ENCODE measurements at regions of chr19 and their contacts with region 1.

Region 1: GRCh38 chr19:29714953-29715700 is at the start of gene C19orf12:
- H3K4me3 ChIP-seq: peak within 1 kb of the TSS; percentile 65
- H3K27ac ChIP-seq: peak within 1 kb of the TSS; percentile 96
- H3K4me1 ChIP-seq: peaks cover 16% of the 10 kb centered on the region
- CTCF ChIP-seq: 0 out of 2 replicates have a peak, but pooled peaks have one; percentile 34

Region 2: GRCh38 chr19:29610563-29611271 is 104.4 kb before region 1 on chr19:
- CTCF ChIA-PET with region 1: interaction called, 299 read pairs
- POLR2A ChIA-PET with region 1: interaction called, 40 read pairs
- H3K4me3 ChIP-seq: no peak overlapping the region
- H3K27ac ChIP-seq: no peak overlapping the region
- H3K4me1 ChIP-seq: peaks cover 7% of the 10 kb centered on the region
- CTCF ChIP-seq: peak; percentile 98

Region 3: GRCh38 chr19:29645911-29646310 is 69.2 kb before region 1 on chr19:
- CTCF ChIA-PET with region 1: interaction called, 12 read pairs
- POLR2A ChIA-PET with region 1: no interaction called
- H3K4me3 ChIP-seq: no peak overlapping the region
- H3K27ac ChIP-seq: no peak overlapping the region
- H3K4me1 ChIP-seq: peaks cover 7% of the 10 kb centered on the region; the same call in 1 of the 2 replicates
- CTCF ChIP-seq: no peak

Region 4: GRCh38 chr19:29680447-29680846 is 34.7 kb before region 1 on chr19:
- CTCF ChIA-PET with region 1: interaction called, 11 read pairs
- POLR2A ChIA-PET with region 1: interaction called, 3 read pairs
- H3K4me3 ChIP-seq: no peak overlapping the region
- H3K27ac ChIP-seq: no peak overlapping the region
- H3K4me1 ChIP-seq: no peaks in the 10 kb centered on the region
- CTCF ChIP-seq: no peak

Region 5: DNA sequence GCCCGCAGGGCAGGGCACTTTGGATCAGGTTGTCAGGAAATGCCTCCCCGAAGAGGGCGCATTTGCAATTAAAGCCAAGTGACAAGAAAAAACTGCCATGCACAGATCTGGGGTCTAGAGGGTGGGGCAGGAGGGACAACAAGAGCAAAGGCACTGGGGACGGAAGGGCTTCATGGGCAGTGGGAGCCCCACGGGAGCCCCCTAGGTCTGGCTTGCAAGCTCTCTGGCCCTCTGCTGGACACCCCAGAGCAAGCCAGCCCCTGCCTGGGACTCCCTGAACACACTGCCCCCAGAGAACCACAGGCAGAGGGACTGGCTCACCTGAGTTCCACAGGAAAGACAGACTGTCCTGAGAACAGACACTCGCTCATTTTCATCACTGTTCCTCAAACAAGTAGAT is 30.1 kb after region 1 on chr19:
- CTCF ChIA-PET with region 1: interaction called, 12 read pairs
- POLR2A ChIA-PET with region 1: interaction called, 4 read pairs
- H3K4me3 ChIP-seq: no peak overlapping the region
- H3K27ac ChIP-seq: no peak overlapping the region
- H3K4me1 ChIP-seq: 0 out of 2 replicates have a peak, but pooled peaks cover 3% of the 10 kb centered on the region
- CTCF ChIP-seq: peak; percentile 92

Region 6: GRCh38 chr19:29873024-29873800 is 158.1 kb after region 1 on chr19:
- CTCF ChIA-PET with region 1: interaction called, 20 read pairs
- POLR2A ChIA-PET with region 1: interaction called, 3 read pairs
- H3K4me3 ChIP-seq: peak overlapping the region; percentile 47
- H3K27ac ChIP-seq: peak overlapping the region; percentile 76; the same call in 1 of the 2 replicates
- H3K4me1 ChIP-seq: peaks cover 12% of the 10 kb centered on the region
- CTCF ChIP-seq: peak; percentile 86

Region 7: DNA sequence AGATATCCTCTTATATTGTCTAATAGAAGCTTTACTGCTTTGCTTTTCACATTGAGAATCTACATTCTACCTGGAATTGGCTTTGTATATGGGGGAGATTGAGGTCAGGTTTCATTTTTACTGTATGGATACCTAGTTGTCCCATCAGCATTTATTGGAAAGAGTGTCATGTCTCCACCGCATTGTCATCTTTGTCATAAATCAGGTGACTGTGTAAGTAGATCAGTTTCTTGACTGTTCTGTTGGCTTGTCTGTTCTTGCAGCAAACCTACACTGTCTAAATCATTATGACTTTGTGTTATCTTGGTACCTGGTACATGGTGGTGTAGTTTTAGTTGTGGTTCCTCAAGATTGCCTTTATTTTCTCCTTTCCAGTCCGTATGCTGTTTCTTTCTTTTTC is 232.7 kb after region 1 on chr19:
- CTCF ChIA-PET with region 1: no interaction called
- POLR2A ChIA-PET with region 1: no interaction called
- H3K4me3 ChIP-seq: no peak overlapping the region
- H3K27ac ChIP-seq: no peak overlapping the region
- H3K4me1 ChIP-seq: peaks cover 48% of the 10 kb centered on the region
- CTCF ChIP-seq: no peak

Measured in HEK293 (cell line).